ENCODE measurements at regions of chr1 and their contacts with region 1.

Region 1: DNA sequence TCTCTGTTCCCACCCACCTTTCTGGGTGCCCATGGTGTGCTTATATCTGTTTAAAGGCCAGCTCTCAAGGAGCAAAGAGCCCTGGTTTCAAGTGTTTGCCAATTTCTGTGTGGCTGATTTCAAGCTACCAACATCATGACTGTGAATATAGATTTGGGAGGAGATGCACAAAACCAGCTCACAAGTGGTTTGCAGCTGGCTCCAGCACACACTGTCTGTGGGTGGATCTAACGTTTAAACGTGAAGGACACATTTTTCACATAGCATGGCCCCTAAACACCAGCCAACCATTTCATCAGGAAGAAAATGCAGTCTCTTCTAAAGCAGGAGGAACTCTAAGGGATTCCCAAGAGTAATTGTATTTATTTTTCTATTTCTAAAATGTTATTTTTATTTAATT is 65.2 kb downstream of the FCRL5 start:
- DNase-seq: no peak
- H3K4me3 ChIP-seq: no peak overlapping the region
- H3K27ac ChIP-seq: no peak overlapping the region
- H3K4me1 ChIP-seq: no peaks in the 10 kb centered on the region
- H3K27me3 ChIP-seq: peaks cover 21% of the 10 kb centered on the region
- CTCF ChIP-seq: no peak

Region 2: DNA sequence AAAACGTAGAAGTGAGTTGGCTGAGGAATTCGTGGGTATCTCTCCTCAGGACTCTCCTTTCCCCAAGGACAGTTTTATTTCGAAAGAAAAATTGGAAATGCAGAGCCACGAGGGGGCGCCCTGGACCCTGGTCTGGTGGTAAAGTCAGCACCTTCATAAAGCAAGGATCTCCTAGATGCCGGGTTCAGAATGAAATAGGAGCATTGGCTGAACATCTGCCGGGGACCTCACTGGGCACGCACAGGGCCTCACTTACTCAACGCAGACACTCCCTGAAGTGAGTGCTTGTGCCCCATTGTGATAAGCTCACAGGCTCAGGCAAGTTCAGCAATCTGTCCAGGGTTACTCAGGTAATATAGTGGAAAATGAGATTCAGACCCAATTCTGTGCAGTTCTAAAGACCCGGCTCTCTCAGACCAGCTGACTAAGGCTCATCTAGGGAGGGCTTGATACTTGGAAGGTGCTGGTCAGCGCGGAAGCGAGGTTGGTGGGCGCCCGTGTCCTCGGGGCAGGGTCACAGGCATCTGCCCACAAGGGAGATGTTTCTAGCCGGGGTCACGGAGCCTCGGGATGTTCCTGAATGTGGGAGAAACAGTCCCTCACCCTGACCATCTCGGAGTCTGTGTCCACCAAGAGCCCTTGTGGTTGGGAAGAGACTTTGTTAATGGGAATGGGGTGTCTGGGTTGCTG is 293.2 kb before region 1 on chr1:
- intact Hi-C with region 1: loop called (anchors 10 kb)
- DNase-seq: peak; percentile 39
- H3K4me3 ChIP-seq: no peak overlapping the region
- H3K27ac ChIP-seq: no peak overlapping the region
- H3K4me1 ChIP-seq: peaks cover 7% of the 10 kb centered on the region
- H3K27me3 ChIP-seq: peaks cover 91% of the 10 kb centered on the region
- CTCF ChIP-seq: peak; percentile 63

Region 3: DNA sequence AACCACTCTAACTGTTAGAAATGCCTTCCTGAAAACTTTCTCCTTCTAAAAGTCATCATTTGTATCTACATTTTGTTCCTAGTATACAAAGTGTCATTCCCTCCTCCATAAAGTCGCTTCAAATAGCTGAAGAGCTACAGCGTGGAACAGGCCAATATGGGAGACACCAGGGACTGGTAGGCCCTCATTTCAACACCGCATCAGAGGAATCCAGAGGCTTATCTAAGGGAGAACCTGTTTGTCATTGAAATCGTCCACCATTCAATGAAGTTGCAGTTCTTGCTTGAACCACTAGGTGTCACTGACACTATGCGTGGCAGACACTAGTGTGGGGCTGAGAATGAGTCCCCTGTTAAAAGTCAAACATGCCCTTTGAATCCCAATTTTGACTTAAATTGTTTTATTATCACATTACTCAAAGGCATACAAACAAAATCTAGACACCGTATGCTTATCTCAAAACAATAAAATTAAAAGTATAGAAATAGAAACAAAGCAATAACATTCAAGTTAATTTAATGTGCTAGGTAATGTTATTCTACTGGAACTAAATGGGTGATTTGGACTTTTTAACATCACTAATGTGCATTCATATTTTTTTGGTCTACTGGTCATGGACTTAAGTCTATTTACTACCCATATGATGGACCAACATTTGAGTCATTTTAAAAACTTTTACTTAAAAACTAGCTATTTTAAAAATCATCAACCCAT is 117.1 kb before region 1 on chr1:
- intact Hi-C with region 1: loop called (anchors 10 kb)
- DNase-seq: no peak
- H3K4me3 ChIP-seq: no peak overlapping the region
- H3K27ac ChIP-seq: no peak overlapping the region
- H3K4me1 ChIP-seq: no peaks in the 10 kb centered on the region
- H3K27me3 ChIP-seq: peaks cover 43% of the 10 kb centered on the region
- CTCF ChIP-seq: peak; percentile 94